Activated CD4-positive, alpha-beta T cell treated with anti-CD3 and anti-CD28 coated beads for 36 hours (primary cell): ENCODE measurements at regions of chr12 and their contacts with region 1.

Region 1: GRCh38 chr12:12909995-12910391 is 18.6 kb downstream of the GPRC5A start:
- DNase-seq: no peak
- ATAC-seq: peak; percentile 22
- H3K4me3 Mint-ChIP-seq: no peak overlapping the region
- H3K27ac Mint-ChIP-seq: no peak overlapping the region
- H3K4me1 Mint-ChIP-seq: peaks cover 18% of the 10 kb centered on the region
- H3K27me3 Mint-ChIP-seq: no peaks in the 10 kb centered on the region

Region 2: GRCh38 chr12:12696562-12697383 is 213.2 kb before region 1 on chr12:
- CTCF ChIA-PET with region 1: no interaction called
- POLR2A ChIA-PET with region 1: no interaction called
- intact Hi-C with region 1: no loop called
- DNase-seq: peak; percentile 94
- ATAC-seq: peak; percentile 80
- H3K4me3 Mint-ChIP-seq: peak overlapping the region; percentile 83
- H3K27ac Mint-ChIP-seq: peak overlapping the region; percentile 99
- H3K4me1 Mint-ChIP-seq: peaks cover 53% of the 10 kb centered on the region
- H3K27me3 Mint-ChIP-seq: no peaks in the 10 kb centered on the region

Region 3: GRCh38 chr12:13067322-13067721 is 157.3 kb after region 1 on chr12:
- CTCF ChIA-PET with region 1: interaction called, 6 read pairs
- POLR2A ChIA-PET with region 1: no interaction called
- intact Hi-C with region 1: loop called in 1 of 2 experiments (anchors 5 kb)
- DNase-seq: no peak
- ATAC-seq: no peak
- H3K4me3 Mint-ChIP-seq: no peak overlapping the region
- H3K27ac Mint-ChIP-seq: no peak overlapping the region
- H3K4me1 Mint-ChIP-seq: peaks cover 2% of the 10 kb centered on the region
- H3K27me3 Mint-ChIP-seq: no peaks in the 10 kb centered on the region